ENCODE measurements at regions of chr1 and their contacts with region 1.

Region 1: DNA sequence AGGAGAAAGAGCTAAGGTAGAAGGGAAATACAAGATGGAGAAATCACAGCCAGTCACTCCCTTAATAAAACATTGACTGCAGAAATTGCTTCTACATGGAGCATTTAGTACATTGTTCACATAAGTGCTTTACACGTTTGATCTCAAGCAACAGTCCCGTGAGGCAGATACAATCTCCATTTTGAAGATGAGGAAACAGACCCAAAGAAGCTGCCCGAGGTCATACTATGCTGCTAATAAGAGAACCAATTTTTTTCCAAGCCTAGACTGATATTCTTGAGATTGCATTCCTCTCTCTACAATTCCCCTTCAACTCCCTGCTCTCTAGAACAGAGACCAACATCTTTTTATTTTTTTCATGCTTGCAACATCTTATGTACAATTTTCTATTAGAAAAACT is 11.0 kb downstream of the DENND2D start:
- DNase-seq: no peak
- H3K4me3 Mint-ChIP-seq: no peak overlapping the region
- H3K27ac Mint-ChIP-seq: peak overlapping the region; percentile 97
- H3K4me1 Mint-ChIP-seq: peaks cover 88% of the 10 kb centered on the region
- H3K27me3 Mint-ChIP-seq: no peaks in the 10 kb centered on the region

Region 2: GRCh38 chr1:111148376-111148881 is 41.1 kb before region 1 on chr1:
- CTCF ChIA-PET with region 1: no interaction called
- POLR2A ChIA-PET with region 1: no interaction called
- intact Hi-C with region 1: loop called (anchors 2 kb)
- DNase-seq: no peak
- H3K4me3 Mint-ChIP-seq: no peak overlapping the region
- H3K27ac Mint-ChIP-seq: no peak overlapping the region
- H3K4me1 Mint-ChIP-seq: peaks cover 74% of the 10 kb centered on the region
- H3K27me3 Mint-ChIP-seq: no peaks in the 10 kb centered on the region

Region 3: GRCh38 chr1:111267801-111268508 is 78.5 kb after region 1 on chr1:
- CTCF ChIA-PET with region 1: no interaction called
- POLR2A ChIA-PET with region 1: no interaction called
- intact Hi-C with region 1: no loop called
- DNase-seq: no peak
- H3K4me3 Mint-ChIP-seq: no peak overlapping the region
- H3K27ac Mint-ChIP-seq: no peak overlapping the region
- H3K4me1 Mint-ChIP-seq: peaks cover 8% of the 10 kb centered on the region
- H3K27me3 Mint-ChIP-seq: peaks cover 24% of the 10 kb centered on the region